ENCODE measurements at regions of chr7 and their contacts with region 1.

Region 1: GRCh38 chr7:102055181-102055976 is 231.3 kb upstream of the SH2B2 start:
- DNase-seq: no peak
- H3K4me3 ChIP-seq: no peak overlapping the region
- H3K4me3 Mint-ChIP-seq: no peak overlapping the region
- H3K27ac Mint-ChIP-seq: no peak overlapping the region
- H3K4me1 ChIP-seq: 0 out of 2 replicates have a peak, but pooled peaks cover 3% of the 10 kb centered on the region
- H3K4me1 Mint-ChIP-seq: peaks cover 13% of the 10 kb centered on the region
- H3K27me3 ChIP-seq: no peaks in the 10 kb centered on the region
- H3K27me3 Mint-ChIP-seq: no peaks in the 10 kb centered on the region
- CTCF ChIP-seq: no peak

Region 2: DNA sequence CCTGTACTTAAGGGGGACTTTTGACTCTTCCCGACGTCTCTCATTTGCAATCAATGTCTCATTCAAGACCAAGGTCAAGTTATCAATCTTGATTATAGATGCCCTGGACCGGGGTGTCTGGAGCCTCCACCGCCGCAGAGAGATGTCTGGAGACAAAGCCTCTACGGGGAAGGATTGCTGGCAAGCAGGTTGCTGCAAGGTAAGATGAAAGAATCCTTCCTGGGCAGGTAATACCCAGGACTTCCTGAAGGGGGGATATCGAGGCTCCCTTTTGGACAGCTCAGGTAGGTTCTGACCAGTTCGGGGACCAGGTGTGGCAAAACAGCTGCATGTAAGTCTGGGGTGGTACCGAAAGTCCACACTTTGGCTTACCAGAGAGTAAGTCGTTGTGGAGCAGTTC is 250.4 kb before region 1 on chr7:
- CTCF ChIA-PET with region 1: interaction called, 10 read pairs
- POLR2A ChIA-PET with region 1: no interaction called
- intact Hi-C with region 1: no loop called
- DNase-seq: peak; percentile 73
- H3K4me3 ChIP-seq: no peak overlapping the region
- H3K4me3 Mint-ChIP-seq: no peak overlapping the region
- H3K27ac Mint-ChIP-seq: no peak overlapping the region
- H3K4me1 ChIP-seq: no peaks in the 10 kb centered on the region
- H3K4me1 Mint-ChIP-seq: peaks cover 17% of the 10 kb centered on the region
- H3K27me3 ChIP-seq: no peaks in the 10 kb centered on the region
- H3K27me3 Mint-ChIP-seq: no peaks in the 10 kb centered on the region
- CTCF ChIP-seq: peak; percentile 51 to 59